Body of pancreas (tissue), 4 donors: ENCODE measurements at regions of chr9 and their contacts with region 1.

Region 1: DNA sequence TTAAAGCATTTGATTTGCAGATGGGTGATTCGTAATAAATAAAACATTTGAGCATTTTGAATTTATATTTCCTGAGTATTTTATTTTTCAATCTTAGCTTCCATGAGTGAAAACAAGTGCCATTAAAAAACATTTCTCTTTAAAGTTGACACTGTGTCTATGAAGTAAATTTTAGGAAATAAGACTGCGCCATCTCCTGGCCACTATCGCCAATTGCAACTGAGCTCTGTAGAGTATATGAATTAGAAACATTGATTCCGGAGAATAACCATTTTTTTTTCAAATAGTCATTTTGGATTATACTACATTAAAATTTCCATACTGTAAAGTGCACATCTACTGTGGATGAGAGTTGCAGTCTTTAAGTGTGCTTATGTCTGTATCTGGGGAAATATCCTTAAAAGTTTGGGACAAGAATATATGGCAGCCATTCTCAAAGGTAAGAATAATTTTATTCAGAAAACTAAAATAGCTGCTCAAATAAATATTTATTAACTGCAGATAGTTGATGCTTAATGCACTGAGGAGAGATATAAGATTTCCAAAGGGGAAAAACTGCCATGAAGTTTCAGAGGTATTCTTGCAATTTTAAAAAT is 5.9 kb downstream of the DMRTA1 start:
- DNase-seq: peak; percentile 43 to 71 (median 60)
- ATAC-seq: peak; percentile 45
- H3K4me3 ChIP-seq: no peak overlapping the region
- H3K27ac ChIP-seq: no peak overlapping the region
- H3K4me1 ChIP-seq: peaks cover 22% of the 10 kb centered on the region
- H3K27me3 ChIP-seq: no peaks in the 10 kb centered on the region
- CTCF ChIP-seq: peak; percentile 56 to 94 (median 72)
- POLR2A ChIP-seq: no peak

Region 2: GRCh38 chr9:22244141-22245011 is 208.1 kb before region 1 on chr9:
- intact Hi-C with region 1: loop called (anchors 10 kb)
- DNase-seq: peak; percentile 18 to 41 (median 28)
- ATAC-seq: peak; percentile 80
- H3K4me3 ChIP-seq: no peak overlapping the region
- H3K27ac ChIP-seq: no peak overlapping the region
- H3K4me1 ChIP-seq: no peaks in the 10 kb centered on the region
- H3K27me3 ChIP-seq: no peaks in the 10 kb centered on the region
- CTCF ChIP-seq: peak in 6 of 7 experiments; percentile 33 to 62 (median 60)
- POLR2A ChIP-seq: no peak

Region 3: GRCh38 chr9:22307013-22307711 is 145.4 kb before region 1 on chr9:
- intact Hi-C with region 1: loop called (anchors 10 kb)
- DNase-seq: peak; percentile 18 to 63 (median 45)
- ATAC-seq: peak; percentile 68
- H3K4me3 ChIP-seq: no peak overlapping the region
- H3K27ac ChIP-seq: no peak overlapping the region
- H3K4me1 ChIP-seq: no peaks in the 10 kb centered on the region
- H3K27me3 ChIP-seq: no peaks in the 10 kb centered on the region
- CTCF ChIP-seq: peak; percentile 31 to 76 (median 68)
- POLR2A ChIP-seq: no peak